Mammary epithelial cell (primary cell): ENCODE measurements at regions of chr3 and their contacts with region 1.

Region 1: GRCh38 chr3:53709860-53710674 is 136.2 kb downstream of the CHDH start:
- DNase-seq: peak; percentile 21
- H3K4me3 ChIP-seq: no peak overlapping the region
- H3K27ac ChIP-seq: no peak overlapping the region
- H3K4me1 ChIP-seq: no peaks in the 10 kb centered on the region
- H3K27me3 ChIP-seq: peaks cover 2% of the 10 kb centered on the region
- CTCF ChIP-seq: peak; percentile 67 to 84

Region 2: GRCh38 chr3:53219895-53220483 is 490.1 kb before region 1 on chr3:
- CTCF ChIA-PET with region 1: no interaction called
- dilution Hi-C with region 1: no loop called
- in situ Hi-C with region 1: no loop called
- intact Hi-C with region 1: loop called (anchors 10 kb)
- DNase-seq: peak; percentile 63
- H3K4me3 ChIP-seq: no peak overlapping the region
- H3K27ac ChIP-seq: no peak overlapping the region
- H3K4me1 ChIP-seq: no peaks in the 10 kb centered on the region
- H3K27me3 ChIP-seq: no peaks in the 10 kb centered on the region
- CTCF ChIP-seq: peak; percentile 96 to 97

Region 3: DNA sequence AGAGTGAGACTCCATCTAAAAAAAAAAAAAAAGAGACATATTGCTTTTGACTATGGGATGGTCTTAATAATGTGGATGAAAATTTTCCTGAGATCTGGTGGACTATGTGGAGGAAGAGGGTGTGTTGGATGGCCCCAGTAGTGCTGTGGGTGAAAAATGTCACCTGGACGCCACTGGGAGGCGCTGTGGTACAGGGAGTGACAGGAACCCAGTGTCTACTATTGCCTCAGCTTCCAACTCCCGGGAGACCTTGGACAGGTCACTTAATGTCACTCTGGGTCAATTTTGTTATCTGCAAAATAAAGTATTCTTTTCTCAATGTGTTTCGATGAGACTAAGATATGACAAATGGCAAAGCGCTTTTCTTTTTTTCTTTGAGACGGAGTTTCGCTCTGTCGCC is 335.0 kb before region 1 on chr3:
- CTCF ChIA-PET with region 1: no interaction called
- dilution Hi-C with region 1: no loop called
- in situ Hi-C with region 1: loop called (anchors 5 to 10 kb)
- intact Hi-C with region 1: loop called (anchors 2 kb)
- DNase-seq: peak; percentile 28
- H3K4me3 ChIP-seq: no peak overlapping the region
- H3K27ac ChIP-seq: no peak overlapping the region
- H3K4me1 ChIP-seq: no peaks in the 10 kb centered on the region
- H3K27me3 ChIP-seq: no peaks in the 10 kb centered on the region
- CTCF ChIP-seq: peak; percentile 93 to 94

Region 4: GRCh38 chr3:53604232-53604631 is 105.8 kb before region 1 on chr3:
- CTCF ChIA-PET with region 1: no interaction called
- dilution Hi-C with region 1: no loop called
- in situ Hi-C with region 1: no loop called
- intact Hi-C with region 1: loop called (anchors 1 kb)
- DNase-seq: no peak
- H3K4me3 ChIP-seq: no peak overlapping the region
- H3K27ac ChIP-seq: no peak overlapping the region
- H3K4me1 ChIP-seq: no peaks in the 10 kb centered on the region
- H3K27me3 ChIP-seq: no peaks in the 10 kb centered on the region
- CTCF ChIP-seq: peak in 1 of 2 donors; percentile 15

Region 5: GRCh38 chr3:53789408-53789807 is 79.3 kb after region 1 on chr3:
- CTCF ChIA-PET with region 1: no interaction called
- dilution Hi-C with region 1: loop called (anchors 5 kb)
- in situ Hi-C with region 1: no loop called
- intact Hi-C with region 1: no loop called
- DNase-seq: no peak
- H3K4me3 ChIP-seq: no peak overlapping the region
- H3K27ac ChIP-seq: no peak overlapping the region
- H3K4me1 ChIP-seq: peaks cover 4% of the 10 kb centered on the region
- H3K27me3 ChIP-seq: no peaks in the 10 kb centered on the region
- CTCF ChIP-seq: no peak